ENCODE measurements at regions of chr12 and their contacts with region 1.

Region 1: GRCh38 chr12:29317556-29318363 is 63.2 kb downstream of the ERGIC2 start:
- DNase-seq: peak; percentile 61
- H3K4me3 Mint-ChIP-seq: no peak overlapping the region
- H3K27ac Mint-ChIP-seq: no peak overlapping the region
- H3K4me1 Mint-ChIP-seq: peaks cover 11% of the 10 kb centered on the region
- H3K27me3 Mint-ChIP-seq: no peaks in the 10 kb centered on the region

Region 2: GRCh38 chr12:29073628-29074239 is 244.0 kb before region 1 on chr12:
- CTCF ChIA-PET with region 1: interaction called, 14 read pairs
- POLR2A ChIA-PET with region 1: no interaction called
- DNase-seq: peak; percentile 35
- H3K4me3 Mint-ChIP-seq: no peak overlapping the region
- H3K27ac Mint-ChIP-seq: no peak overlapping the region
- H3K4me1 Mint-ChIP-seq: no peaks in the 10 kb centered on the region
- H3K27me3 Mint-ChIP-seq: peaks cover 24% of the 10 kb centered on the region